Activated CD4-positive, alpha-beta T cell treated with anti-CD3 and anti-CD28 coated beads for 36 hours (primary cell): ENCODE measurements at regions of chr2 and their contacts with region 1.

Region 1: GRCh38 chr2:62195421-62196277 is at the start of gene B3GNT2:
- DNase-seq: peak; percentile 92
- ATAC-seq: peak; percentile 62
- H3K4me3 Mint-ChIP-seq: peak within 1 kb of the TSS; percentile 92
- H3K27ac Mint-ChIP-seq: peak within 1 kb of the TSS; percentile 92
- H3K4me1 Mint-ChIP-seq: peaks cover 28% of the 10 kb centered on the region
- H3K27me3 Mint-ChIP-seq: no peaks in the 10 kb centered on the region
- total RNA-seq, gene B3GNT2: 28.6 to 31.7 TPM

Region 2: DNA sequence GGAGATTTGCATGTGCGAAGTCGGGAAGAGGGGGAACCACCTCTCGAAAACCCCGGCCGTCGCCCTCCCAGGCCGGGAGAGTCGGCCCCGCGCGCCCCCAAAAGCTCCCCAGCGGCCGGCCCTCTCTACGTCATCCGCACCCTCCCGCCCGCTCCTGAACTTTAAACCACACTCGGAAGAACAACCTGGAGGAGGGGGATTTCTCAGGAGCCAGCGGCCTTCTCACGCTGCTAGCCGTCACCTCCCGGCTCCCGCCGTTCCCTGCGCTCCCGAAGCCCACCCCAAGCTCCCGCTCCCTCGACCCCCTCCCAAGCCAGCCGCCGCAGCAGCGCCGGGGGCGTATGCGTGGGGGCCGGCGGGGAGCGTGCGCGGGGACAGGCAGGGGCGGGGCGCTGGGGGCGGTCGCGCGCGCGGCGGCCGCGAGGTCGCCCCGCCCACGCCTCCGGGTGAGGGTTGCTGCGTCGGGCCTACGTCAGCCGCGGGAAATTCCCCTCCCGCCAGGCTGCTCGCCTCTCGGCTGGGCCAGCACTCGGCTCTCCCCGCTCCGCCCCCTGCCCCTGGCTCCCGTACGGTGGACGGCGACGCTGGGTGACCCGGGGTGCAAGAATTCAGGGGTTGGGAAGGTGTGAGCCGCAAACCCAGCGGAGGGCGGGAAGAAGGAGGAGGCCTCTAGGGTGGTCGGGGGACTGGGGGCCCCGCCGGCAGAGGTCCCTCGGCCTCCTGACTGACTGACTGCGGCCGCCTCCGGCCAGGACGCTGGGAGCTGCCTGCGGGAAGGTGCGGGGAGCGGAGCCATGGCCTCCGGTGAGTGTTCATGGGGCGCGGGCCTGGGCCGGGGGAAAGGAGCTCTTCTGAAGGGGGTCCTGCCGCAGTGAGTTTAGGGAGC is 1314.4 kb before region 1 on chr2 and contains the start of gene REL:
- CTCF ChIA-PET with region 1: no interaction called
- POLR2A ChIA-PET with region 1: no interaction called
- intact Hi-C with region 1: loop called in 1 of 2 experiments (anchors 2 kb)
- DNase-seq: peak; percentile 95
- ATAC-seq: peak; percentile 84
- H3K4me3 Mint-ChIP-seq: peak within 1 kb of the TSS; percentile 91
- H3K27ac Mint-ChIP-seq: peak within 1 kb of the TSS; percentile 98
- H3K4me1 Mint-ChIP-seq: peaks cover 25% of the 10 kb centered on the region
- H3K27me3 Mint-ChIP-seq: no peaks in the 10 kb centered on the region
- total RNA-seq, gene REL: 42.7 to 55.9 TPM

Region 3: GRCh38 chr2:61888267-61889055 is 307.2 kb before region 1 on chr2 and contains the start of gene CCT4:
- CTCF ChIA-PET with region 1: no interaction called
- POLR2A ChIA-PET with region 1: no interaction called
- intact Hi-C with region 1: loop called in 1 of 2 experiments (anchors 1 kb)
- DNase-seq: peak; percentile 93
- ATAC-seq: peak; percentile 79
- H3K4me3 Mint-ChIP-seq: peak within 1 kb of the TSS; percentile 99
- H3K27ac Mint-ChIP-seq: peak within 1 kb of the TSS; percentile 99
- H3K4me1 Mint-ChIP-seq: peaks cover 31% of the 10 kb centered on the region
- H3K27me3 Mint-ChIP-seq: no peaks in the 10 kb centered on the region
- total RNA-seq, gene CCT4: 255 to 373 TPM

Region 4: GRCh38 chr2:61910603-61911002 is 285.0 kb before region 1 on chr2:
- CTCF ChIA-PET with region 1: no interaction called
- POLR2A ChIA-PET with region 1: no interaction called
- intact Hi-C with region 1: loop called (anchors 1 to 10 kb)
- DNase-seq: no peak
- ATAC-seq: no peak
- H3K4me3 Mint-ChIP-seq: no peak overlapping the region
- H3K27ac Mint-ChIP-seq: no peak overlapping the region
- H3K4me1 Mint-ChIP-seq: peaks cover 10% of the 10 kb centered on the region
- H3K27me3 Mint-ChIP-seq: no peaks in the 10 kb centered on the region

Region 5: GRCh38 chr2:62149708-62150107 is 45.9 kb before region 1 on chr2:
- CTCF ChIA-PET with region 1: no interaction called
- POLR2A ChIA-PET with region 1: no interaction called
- intact Hi-C with region 1: no loop called
- DNase-seq: no peak
- ATAC-seq: peak; percentile 65
- H3K4me3 Mint-ChIP-seq: no peak overlapping the region
- H3K27ac Mint-ChIP-seq: no peak overlapping the region
- H3K4me1 Mint-ChIP-seq: peaks cover 6% of the 10 kb centered on the region
- H3K27me3 Mint-ChIP-seq: no peaks in the 10 kb centered on the region

Region 6: GRCh38 chr2:62410015-62410453 is 214.4 kb after region 1 on chr2:
- CTCF ChIA-PET with region 1: interaction called, 4 read pairs
- POLR2A ChIA-PET with region 1: no interaction called
- intact Hi-C with region 1: loop called (anchors 2 to 5 kb)
- DNase-seq: no peak
- ATAC-seq: no peak
- H3K4me3 Mint-ChIP-seq: no peak overlapping the region
- H3K27ac Mint-ChIP-seq: no peak overlapping the region
- H3K4me1 Mint-ChIP-seq: peaks cover 4% of the 10 kb centered on the region
- H3K27me3 Mint-ChIP-seq: no peaks in the 10 kb centered on the region